SK-N-SH (cell line): ENCODE measurements at regions of chr15 and their contacts with region 1.

Region 1: DNA sequence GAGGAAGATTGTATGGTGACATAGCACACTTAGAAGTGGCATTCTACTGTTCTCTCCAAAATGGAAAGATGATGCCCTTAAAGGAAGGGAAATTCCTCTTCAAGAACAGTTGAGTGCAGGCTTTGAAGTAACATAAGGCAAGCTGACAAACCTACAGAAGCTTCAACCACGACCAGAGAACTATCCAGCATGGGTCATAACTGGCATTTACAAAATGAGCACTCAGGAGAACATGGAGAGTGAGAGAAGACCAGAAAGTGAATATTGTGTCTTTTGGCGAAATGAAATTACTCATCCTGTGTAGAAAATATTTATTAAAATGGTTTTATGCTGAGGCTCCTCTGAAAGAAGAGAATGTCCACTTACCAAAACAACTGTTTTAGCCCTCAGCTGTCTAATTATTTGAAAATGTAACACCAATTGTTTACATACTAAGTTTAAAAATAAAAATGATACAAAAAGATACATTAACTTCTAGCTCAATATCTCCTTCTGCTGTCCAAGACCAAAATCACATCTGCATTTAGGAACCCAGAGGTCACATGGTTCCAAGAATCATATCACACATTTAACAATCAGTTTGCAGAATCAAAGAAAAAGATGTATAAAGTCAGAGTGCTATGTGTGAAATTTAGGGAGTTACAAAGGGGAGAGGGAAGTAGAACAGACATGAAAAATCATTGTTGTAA is 216.9 kb downstream of the ATP8B4 start:
- DNase-seq: no peak
- H3K4me3 ChIP-seq: no peak overlapping the region
- H3K27ac ChIP-seq: no peak overlapping the region
- H3K4me1 ChIP-seq: no peaks in the 10 kb centered on the region; a peak in 1 of 4 replicates
- H3K27me3 ChIP-seq: no peaks in the 10 kb centered on the region
- CTCF ChIP-seq: peak; percentile 38
- EP300 ChIP-seq: no peak
- RAD21 ChIP-seq: peak; percentile 60

Region 2: DNA sequence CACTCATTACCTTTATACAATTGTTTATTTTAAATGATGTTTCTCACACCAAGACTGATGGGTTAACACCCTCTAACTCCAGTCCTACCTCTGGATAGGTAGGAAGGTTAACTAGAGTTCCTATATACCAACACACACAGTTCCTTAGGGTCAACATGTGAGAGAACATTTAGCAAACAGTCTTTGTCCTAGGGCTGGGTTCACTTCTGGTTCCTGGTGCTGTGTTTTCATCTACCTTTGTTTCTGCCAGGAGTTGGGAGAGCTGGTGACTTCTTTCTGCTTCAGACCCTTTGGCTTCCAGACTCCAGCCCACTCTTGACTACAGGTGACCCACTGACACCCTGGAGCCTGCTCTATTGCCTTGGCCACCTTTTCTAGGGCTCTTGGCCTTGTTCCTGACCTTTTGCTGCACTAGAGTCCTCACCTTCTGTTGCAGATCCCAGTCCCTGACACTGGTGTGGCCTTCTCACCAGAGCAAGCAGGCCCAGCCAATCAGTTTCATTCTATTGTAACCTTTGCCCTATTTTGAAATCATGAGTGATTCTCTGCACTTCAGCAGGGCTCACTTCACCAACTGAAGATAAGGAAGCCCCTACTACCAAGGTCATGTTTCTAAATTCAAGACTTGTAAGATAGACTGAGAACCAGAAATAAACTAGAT is 805.9 kb before region 1 on chr15:
- CTCF ChIA-PET with region 1: no interaction called
- POLR2A ChIA-PET with region 1: no interaction called
- DNase-seq: no peak
- H3K4me3 ChIP-seq: no peak overlapping the region
- H3K27ac ChIP-seq: no peak overlapping the region
- H3K4me1 ChIP-seq: no peaks in the 10 kb centered on the region
- H3K27me3 ChIP-seq: no peaks in the 10 kb centered on the region
- CTCF ChIP-seq: no peak
- EP300 ChIP-seq: no peak
- RAD21 ChIP-seq: no peak

Region 3: DNA sequence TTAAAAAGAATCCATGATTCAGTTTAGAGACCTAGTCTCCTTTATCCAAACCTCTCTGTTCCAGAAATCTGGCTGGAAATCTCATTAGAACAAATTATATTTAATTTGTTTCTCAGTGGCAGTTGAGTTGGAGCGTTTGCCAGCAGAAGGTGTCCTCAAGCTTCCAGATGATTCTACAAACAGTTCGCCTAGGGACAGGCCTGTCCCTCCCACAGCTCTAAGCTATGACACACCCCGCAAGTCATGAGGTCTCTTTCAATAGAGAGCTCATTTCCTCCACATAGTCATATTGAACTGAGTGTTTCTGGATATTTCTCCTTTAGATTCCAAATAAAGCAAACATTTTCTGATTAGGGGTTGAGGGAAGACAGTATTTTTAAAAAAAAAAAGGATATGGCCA is 13.4 kb before region 1 on chr15:
- CTCF ChIA-PET with region 1: interaction called, 24 read pairs
- POLR2A ChIA-PET with region 1: no interaction called
- DNase-seq: peak; percentile 18
- H3K4me3 ChIP-seq: no peak overlapping the region
- H3K27ac ChIP-seq: peak overlapping the region in 1 of 2 experiments; percentile 83; a peak in 2 of 4 replicates
- H3K4me1 ChIP-seq: peaks cover 0 to 15% of the 10 kb centered on the region in 2 experiments; a peak in 2 of 4 replicates
- H3K27me3 ChIP-seq: no peaks in the 10 kb centered on the region
- CTCF ChIP-seq: no peak
- EP300 ChIP-seq: peak in 1 of 2 experiments; percentile 9; a peak in 1 of 4 replicates
- RAD21 ChIP-seq: peak; percentile 4; the same call in 1 of the 2 replicates